Right ventricle myocardium superior (tissue), 1 donor: ENCODE measurements at regions of chr20 and their contacts with region 1.

Region 1: DNA sequence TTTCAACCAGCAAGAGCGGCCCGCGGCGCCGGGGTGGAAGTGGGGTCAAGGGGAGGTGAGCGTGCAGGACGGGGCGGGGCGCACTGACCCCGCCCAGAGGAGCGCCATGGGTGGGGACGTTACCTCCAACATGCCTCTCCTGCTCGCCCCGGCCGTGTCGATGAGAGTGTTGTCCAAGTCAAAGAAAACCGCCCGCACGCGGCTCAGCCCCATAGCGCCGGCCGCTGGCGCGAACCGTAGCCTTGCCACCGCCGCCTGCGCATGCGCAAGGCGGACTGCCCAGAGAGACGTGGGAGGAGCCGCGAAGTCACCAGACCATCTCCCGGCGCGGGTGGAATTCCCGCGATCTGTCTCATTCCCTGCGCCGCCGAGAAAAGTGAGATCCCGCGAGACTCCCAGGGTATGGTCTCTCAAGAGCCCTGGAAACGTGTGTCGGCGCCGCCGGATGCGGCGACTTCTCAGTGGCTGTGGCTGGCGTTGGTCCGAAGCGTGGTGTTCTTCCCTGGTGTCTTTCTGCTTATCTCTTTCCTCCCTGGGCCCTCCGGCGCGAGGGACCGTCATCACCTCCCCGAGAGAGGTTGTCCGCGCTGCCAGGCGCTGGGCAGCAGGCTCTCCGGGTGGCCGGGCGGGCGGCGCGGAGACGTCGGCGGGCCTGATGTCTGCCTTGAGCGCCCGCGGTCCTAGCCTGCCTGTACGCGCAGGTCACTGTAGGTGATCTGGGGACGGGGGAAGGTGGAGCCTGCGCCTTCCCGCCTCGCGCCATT is at the start of gene NANP:
- DNase-seq: peak; percentile 99
- ATAC-seq: peak; percentile 95
- total RNA-seq, gene NANP: 3.4 TPM

Region 2: DNA sequence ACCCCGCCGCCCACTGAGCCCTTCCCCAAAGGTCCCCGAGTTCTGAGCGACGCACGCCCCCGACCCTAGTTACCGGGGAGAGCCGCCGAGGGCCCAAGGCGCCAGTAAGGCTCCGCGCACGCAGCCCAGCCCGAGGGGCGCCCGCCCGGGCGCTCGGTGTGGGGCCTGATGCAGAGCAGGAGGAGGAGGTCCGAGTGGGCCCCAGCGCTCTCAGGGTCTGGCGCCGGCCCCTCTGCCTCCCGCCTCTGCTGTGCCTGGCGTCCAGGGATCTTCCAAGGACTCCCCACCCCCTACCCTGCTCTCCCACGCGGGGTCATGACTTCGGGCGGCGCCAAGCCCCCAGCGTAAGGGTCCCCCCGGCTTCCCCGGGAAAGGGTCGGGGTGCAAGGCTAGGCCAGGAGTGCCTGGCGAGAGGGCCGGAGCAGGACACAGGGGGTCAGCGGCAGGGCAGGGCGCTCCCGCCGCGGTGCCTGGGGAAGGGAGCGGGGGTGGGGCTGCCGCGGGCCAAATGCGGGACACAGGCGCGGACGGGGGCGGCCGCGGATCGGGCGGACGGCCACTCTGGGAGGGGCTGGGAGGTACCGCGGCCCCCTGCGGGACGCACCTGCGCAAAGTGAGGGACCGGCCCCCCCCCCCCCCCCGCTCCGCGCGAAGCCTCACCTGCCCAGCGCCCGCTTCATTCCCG is 233.9 kb before region 1 on chr20:
- intact Hi-C with region 1: no loop called
- DNase-seq: peak; percentile 56
- ATAC-seq: peak; percentile 35

Region 3: GRCh38 chr20:25696384-25697131 is 72.6 kb after region 1 on chr20 and contains the start of gene ZNF337:
- intact Hi-C with region 1: loop called (anchors 2 kb)
- DNase-seq: peak; percentile 97
- ATAC-seq: peak; percentile 100
- total RNA-seq, gene ZNF337: 6.7 TPM